Transverse colon (tissue), 4 donors: ENCODE measurements at regions of chr1 and their contacts with region 1.

Region 1: GRCh38 chr1:152001391-152002249 is 8.0 kb upstream of the S100A10 start:
- DNase-seq: peak; percentile 94
- H3K4me3 ChIP-seq: no peak overlapping the region
- H3K27ac ChIP-seq: peak overlapping the region; percentile 2 to 48 (median 41)
- H3K4me1 ChIP-seq: peaks cover 0 to 15% (median 2%) of the 10 kb centered on the region in 4 donors
- H3K27me3 ChIP-seq: no peaks in the 10 kb centered on the region
- CTCF ChIP-seq: peak; percentile 92 to 95 (median 94)
- EP300 ChIP-seq: no peak
- POLR2A ChIP-seq: no peak

Region 2: GRCh38 chr1:151790071-151790940 is 211.3 kb before region 1 on chr1 and contains the start of gene TDRKH:
- in situ Hi-C with region 1: no loop called
- intact Hi-C with region 1: no loop called
- DNase-seq: peak; percentile 98
- H3K4me3 ChIP-seq: peak within 1 kb of the TSS; percentile 59 to 93 (median 72)
- H3K27ac ChIP-seq: peak within 1 kb of the TSS; percentile 82 to 87 (median 84)
- H3K4me1 ChIP-seq: peaks cover 0 to 19% (median 7%) of the 10 kb centered on the region in 4 donors
- H3K27me3 ChIP-seq: no peaks in the 10 kb centered on the region
- CTCF ChIP-seq: peak; percentile 10 to 59 (median 32)
- EP300 ChIP-seq: no peak
- POLR2A ChIP-seq: peak; percentile 69
- total RNA-seq, gene TDRKH: 0.80 to 5.4 (median 4.0) TPM

Region 3: GRCh38 chr1:151909150-151910149 is 92.2 kb before region 1 on chr1 and contains the start of gene THEM4:
- in situ Hi-C with region 1: loop called in 2 of 4 experiments (anchors 25 kb)
- intact Hi-C with region 1: no loop called
- DNase-seq: peak; percentile 98
- H3K4me3 ChIP-seq: peak within 1 kb of the TSS; percentile 43 to 72 (median 60)
- H3K27ac ChIP-seq: peak within 1 kb of the TSS; percentile 85 to 88 (median 87)
- H3K4me1 ChIP-seq: peaks cover 0 to 25% (median 6%) of the 10 kb centered on the region in 4 donors
- H3K27me3 ChIP-seq: no peaks in the 10 kb centered on the region
- CTCF ChIP-seq: peak in 3 of 5 experiments; percentile 27 to 51 (median 36)
- EP300 ChIP-seq: no peak
- POLR2A ChIP-seq: peak; percentile 82
- total RNA-seq, gene THEM4: 4.6 to 21.8 (median 9.5) TPM

Region 4: DNA sequence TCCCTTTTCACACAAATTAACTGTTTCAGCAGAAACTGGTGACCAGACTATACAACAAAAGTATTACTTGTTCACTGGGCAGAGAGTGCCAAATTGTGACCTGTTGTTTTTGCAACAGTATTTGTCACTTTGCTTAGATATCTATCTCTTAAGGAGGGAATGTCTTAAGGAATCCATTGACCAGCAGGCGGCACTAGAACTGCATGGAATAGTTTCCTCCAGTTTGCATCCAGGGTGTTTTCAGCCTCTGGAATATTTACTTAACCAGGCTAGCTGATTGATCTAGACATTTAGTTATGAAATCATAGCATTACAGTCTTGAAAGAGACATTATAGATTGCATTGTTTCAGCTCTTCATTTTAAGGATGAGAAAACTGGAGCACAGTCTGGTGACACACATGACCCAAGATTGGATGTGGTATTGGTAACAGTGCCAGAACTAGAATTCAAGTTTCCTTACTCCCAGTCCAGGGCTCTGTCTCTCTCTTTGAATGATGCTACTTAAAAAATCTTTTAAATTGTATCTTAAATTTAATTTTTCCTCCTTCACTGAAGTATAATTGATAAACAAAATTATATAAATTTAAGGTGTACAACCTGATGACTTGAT is 140.5 kb after region 1 on chr1:
- in situ Hi-C with region 1: no loop called
- intact Hi-C with region 1: no loop called
- DNase-seq: peak; percentile 41
- H3K4me3 ChIP-seq: no peak overlapping the region
- H3K27ac ChIP-seq: no peak overlapping the region
- H3K4me1 ChIP-seq: no peaks in the 10 kb centered on the region
- H3K27me3 ChIP-seq: peaks cover 10% of the 10 kb centered on the region
- CTCF ChIP-seq: peak; percentile 56 to 66 (median 63)
- EP300 ChIP-seq: no peak
- POLR2A ChIP-seq: no peak